CD8-positive, alpha-beta T cell (primary cell): ENCODE measurements at regions of chr10 and their contacts with region 1.

Region 1: GRCh38 chr10:132536971-132537712 is 445 bp upstream of the INPP5A start:
- DNase-seq: peak; percentile 99 to 100 (median 100)
- ATAC-seq: peak; percentile 89
- H3K4me3 ChIP-seq: peak overlapping the region; percentile 23 to 65
- H3K4me3 Mint-ChIP-seq: peak overlapping the region; percentile 79
- H3K27ac ChIP-seq: peak overlapping the region; percentile 39 to 56
- H3K27ac Mint-ChIP-seq: peak overlapping the region; percentile 75
- H3K4me1 ChIP-seq: peaks cover 49% of the 10 kb centered on the region
- H3K4me1 Mint-ChIP-seq: peaks cover 49% of the 10 kb centered on the region
- H3K27me3 ChIP-seq: peaks cover 0 to 2% of the 10 kb centered on the region in 2 experiments
- H3K27me3 Mint-ChIP-seq: no peaks in the 10 kb centered on the region
- CTCF ChIP-seq: peak; percentile 27

Region 2: DNA sequence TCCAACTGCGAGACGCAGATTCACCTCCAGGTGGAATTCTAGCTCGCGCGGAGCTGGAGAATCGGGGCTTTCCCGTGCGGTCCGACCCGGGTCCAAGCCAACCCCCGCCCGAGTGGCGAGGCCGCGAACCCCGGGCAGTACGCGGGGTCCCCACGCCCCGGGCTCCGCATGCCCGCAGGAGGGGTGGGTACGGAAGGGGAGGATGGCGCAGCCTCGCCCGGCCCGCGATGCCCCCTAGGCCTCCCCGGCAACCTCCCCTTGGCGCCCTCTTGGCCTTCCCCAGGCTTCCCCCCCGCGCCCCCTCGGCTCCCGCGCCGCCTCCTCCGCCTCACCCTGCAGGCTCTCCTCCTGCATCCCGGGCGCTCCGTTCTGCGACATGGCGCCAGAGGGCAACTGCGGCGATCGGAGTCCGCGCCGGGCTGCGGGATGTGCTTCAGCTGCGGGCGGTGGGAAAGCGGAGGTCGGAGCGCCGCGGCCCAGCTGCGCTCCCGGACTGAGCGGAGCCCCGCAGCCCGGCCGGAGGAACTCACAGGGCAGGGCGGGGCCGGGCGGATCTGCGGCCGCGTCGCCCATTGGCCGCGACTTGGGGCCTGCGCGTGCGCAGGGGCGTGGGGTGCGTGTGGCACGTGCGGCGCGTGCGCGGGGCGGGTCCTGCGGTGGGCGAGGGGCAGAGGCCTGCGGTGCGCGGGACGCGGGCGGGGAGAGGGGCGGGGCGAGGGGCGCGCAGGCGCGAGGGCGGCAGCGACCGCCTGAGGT is 555.5 kb before region 1 on chr10 and contains the start of gene BNIP3:
- CTCF ChIA-PET with region 1: no interaction called
- POLR2A ChIA-PET with region 1: no interaction called
- intact Hi-C with region 1: loop called in 1 of 2 experiments (anchors 5 kb)
- DNase-seq: peak; percentile 84 to 98 (median 94)
- ATAC-seq: peak; percentile 90
- H3K4me3 ChIP-seq: peak within 1 kb of the TSS; percentile 66 to 83
- H3K4me3 Mint-ChIP-seq: peak within 1 kb of the TSS; percentile 84
- H3K27ac ChIP-seq: peak within 1 kb of the TSS; percentile 43 to 48
- H3K27ac Mint-ChIP-seq: peak within 1 kb of the TSS; percentile 81
- H3K4me1 ChIP-seq: peaks cover 47% of the 10 kb centered on the region
- H3K4me1 Mint-ChIP-seq: peaks cover 40% of the 10 kb centered on the region
- H3K27me3 ChIP-seq: no peaks in the 10 kb centered on the region
- H3K27me3 Mint-ChIP-seq: no peaks in the 10 kb centered on the region
- CTCF ChIP-seq: no peak
- total RNA-seq, gene BNIP3: 19.2 to 21.3 TPM

Region 3: DNA sequence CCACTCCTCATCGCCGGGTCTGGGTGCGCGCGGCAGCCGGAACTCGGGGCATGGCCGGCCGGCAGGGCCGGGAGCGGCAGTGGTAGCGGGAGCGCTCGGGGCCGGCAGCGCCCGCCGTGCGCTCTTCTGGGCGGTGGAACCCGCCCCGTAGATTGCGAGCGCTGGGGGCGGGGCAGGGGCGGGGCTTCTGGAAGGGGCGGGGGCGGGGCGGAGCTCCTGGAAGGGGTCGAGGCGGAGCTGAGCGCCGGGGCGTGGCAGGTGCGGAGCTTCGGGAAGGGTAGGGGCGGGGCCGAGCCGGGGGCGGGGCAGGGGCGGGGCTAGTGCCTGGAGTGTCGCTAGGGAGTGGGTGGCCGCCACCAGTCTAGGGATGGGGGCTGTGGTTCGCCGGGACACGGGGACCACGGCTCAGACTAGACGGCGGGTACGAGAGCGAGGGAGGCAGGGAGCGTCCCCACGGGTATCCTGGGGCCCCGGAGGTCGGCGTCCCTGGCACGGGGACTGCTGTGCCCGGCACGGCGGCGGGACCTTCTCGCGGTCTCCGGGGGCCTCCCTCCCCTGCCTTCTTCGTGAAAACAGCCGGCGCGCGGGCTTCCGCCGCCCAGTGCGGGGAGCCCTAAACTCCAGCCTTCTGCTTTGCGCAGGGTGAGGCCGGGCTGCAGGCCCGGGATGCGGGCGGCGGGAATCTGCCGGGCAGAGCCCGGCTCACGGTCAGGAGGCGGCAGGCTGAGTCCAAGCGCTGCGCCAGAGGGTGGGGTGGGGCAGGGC is 229.1 kb before region 1 on chr10 and contains the start of gene STK32C:
- CTCF ChIA-PET with region 1: no interaction called
- POLR2A ChIA-PET with region 1: no interaction called
- intact Hi-C with region 1: loop called in 1 of 2 experiments (anchors 1 kb)
- DNase-seq: peak; percentile 82 to 94 (median 90)
- ATAC-seq: peak; percentile 90
- H3K4me3 ChIP-seq: peak within 1 kb of the TSS; percentile 65 to 74
- H3K4me3 Mint-ChIP-seq: peak within 1 kb of the TSS; percentile 87
- H3K27ac ChIP-seq: peak within 1 kb of the TSS; percentile 43 to 50
- H3K27ac Mint-ChIP-seq: peak within 1 kb of the TSS; percentile 60
- H3K4me1 ChIP-seq: peaks cover 13% of the 10 kb centered on the region
- H3K4me1 Mint-ChIP-seq: peaks cover 17% of the 10 kb centered on the region
- H3K27me3 ChIP-seq: peaks cover 0 to 2% of the 10 kb centered on the region in 2 experiments
- H3K27me3 Mint-ChIP-seq: no peaks in the 10 kb centered on the region
- CTCF ChIP-seq: no peak
- total RNA-seq, gene STK32C: 5.0 to 5.4 TPM

Region 4: GRCh38 chr10:132396495-132397035 is 140.6 kb before region 1 on chr10:
- CTCF ChIA-PET with region 1: no interaction called
- POLR2A ChIA-PET with region 1: no interaction called
- intact Hi-C with region 1: loop called in 1 of 2 experiments (anchors 2 kb)
- DNase-seq: peak in 8 of 9 experiments; percentile 49 to 87 (median 66)
- ATAC-seq: peak; percentile 72
- H3K4me3 ChIP-seq: peak overlapping the region; percentile 30 to 34
- H3K4me3 Mint-ChIP-seq: no peak overlapping the region
- H3K27ac ChIP-seq: peak overlapping the region; percentile 37 to 57
- H3K27ac Mint-ChIP-seq: no peak overlapping the region
- H3K4me1 ChIP-seq: peaks cover 12% of the 10 kb centered on the region
- H3K4me1 Mint-ChIP-seq: peaks cover 22% of the 10 kb centered on the region
- H3K27me3 ChIP-seq: no peaks in the 10 kb centered on the region
- H3K27me3 Mint-ChIP-seq: no peaks in the 10 kb centered on the region
- CTCF ChIP-seq: peak; percentile 17

Region 5: DNA sequence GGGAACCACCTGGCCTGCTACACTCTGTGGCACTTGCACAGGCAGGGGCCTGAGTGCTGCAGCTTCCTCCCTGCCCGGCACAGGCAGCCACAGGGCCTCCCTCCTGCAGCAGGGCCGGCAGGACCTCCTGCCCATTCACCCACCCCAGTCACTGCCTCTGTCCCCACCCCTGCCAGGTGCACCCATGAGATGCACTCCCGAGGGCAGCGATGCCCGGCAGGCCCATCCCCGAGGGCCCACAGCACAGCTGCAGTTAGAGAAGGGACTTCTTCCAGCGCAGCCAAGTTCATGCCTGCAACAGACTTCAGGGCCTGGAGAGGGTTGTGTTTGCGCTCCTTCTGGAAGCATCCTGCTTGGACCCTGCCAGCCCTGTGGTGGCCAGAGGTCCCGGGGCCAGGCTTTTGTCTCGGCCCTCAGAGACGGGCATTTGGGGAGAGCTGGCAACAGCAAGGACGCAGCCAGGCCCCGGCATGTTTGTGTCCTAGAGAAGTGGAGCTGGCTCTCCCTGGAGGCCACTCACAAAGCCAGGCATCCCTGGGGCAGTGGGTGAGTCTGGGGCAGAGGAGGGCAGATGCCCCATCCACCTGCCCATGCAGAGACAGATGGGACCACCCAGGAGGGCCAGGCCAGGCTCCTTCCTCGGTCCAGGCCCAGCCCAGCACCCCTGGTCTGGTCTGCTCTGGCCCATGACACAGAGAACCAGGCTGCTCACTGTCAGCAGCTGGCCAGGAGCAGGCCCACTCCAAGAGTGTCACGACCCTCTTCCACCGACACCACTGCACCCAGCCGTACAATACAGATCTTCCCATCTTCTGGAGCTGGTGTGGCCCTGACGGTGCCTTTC is 98.7 kb before region 1 on chr10:
- CTCF ChIA-PET with region 1: no interaction called
- POLR2A ChIA-PET with region 1: no interaction called
- intact Hi-C with region 1: no loop called
- DNase-seq: no peak
- ATAC-seq: no peak
- H3K4me3 ChIP-seq: no peak overlapping the region
- H3K4me3 Mint-ChIP-seq: no peak overlapping the region
- H3K27ac ChIP-seq: no peak overlapping the region
- H3K27ac Mint-ChIP-seq: no peak overlapping the region
- H3K4me1 ChIP-seq: peaks cover 8% of the 10 kb centered on the region
- H3K4me1 Mint-ChIP-seq: peaks cover 10% of the 10 kb centered on the region
- H3K27me3 ChIP-seq: no peaks in the 10 kb centered on the region
- H3K27me3 Mint-ChIP-seq: no peaks in the 10 kb centered on the region
- CTCF ChIP-seq: no peak

Region 6: GRCh38 chr10:132469197-132469884 is 67.8 kb before region 1 on chr10:
- CTCF ChIA-PET with region 1: no interaction called
- POLR2A ChIA-PET with region 1: no interaction called
- intact Hi-C with region 1: no loop called
- DNase-seq: no peak
- ATAC-seq: no peak
- H3K4me3 ChIP-seq: no peak overlapping the region
- H3K4me3 Mint-ChIP-seq: no peak overlapping the region
- H3K27ac ChIP-seq: no peak overlapping the region
- H3K27ac Mint-ChIP-seq: no peak overlapping the region
- H3K4me1 ChIP-seq: no peaks in the 10 kb centered on the region
- H3K4me1 Mint-ChIP-seq: no peaks in the 10 kb centered on the region
- H3K27me3 ChIP-seq: no peaks in the 10 kb centered on the region
- H3K27me3 Mint-ChIP-seq: peaks cover 4% of the 10 kb centered on the region
- CTCF ChIP-seq: no peak

Region 7: DNA sequence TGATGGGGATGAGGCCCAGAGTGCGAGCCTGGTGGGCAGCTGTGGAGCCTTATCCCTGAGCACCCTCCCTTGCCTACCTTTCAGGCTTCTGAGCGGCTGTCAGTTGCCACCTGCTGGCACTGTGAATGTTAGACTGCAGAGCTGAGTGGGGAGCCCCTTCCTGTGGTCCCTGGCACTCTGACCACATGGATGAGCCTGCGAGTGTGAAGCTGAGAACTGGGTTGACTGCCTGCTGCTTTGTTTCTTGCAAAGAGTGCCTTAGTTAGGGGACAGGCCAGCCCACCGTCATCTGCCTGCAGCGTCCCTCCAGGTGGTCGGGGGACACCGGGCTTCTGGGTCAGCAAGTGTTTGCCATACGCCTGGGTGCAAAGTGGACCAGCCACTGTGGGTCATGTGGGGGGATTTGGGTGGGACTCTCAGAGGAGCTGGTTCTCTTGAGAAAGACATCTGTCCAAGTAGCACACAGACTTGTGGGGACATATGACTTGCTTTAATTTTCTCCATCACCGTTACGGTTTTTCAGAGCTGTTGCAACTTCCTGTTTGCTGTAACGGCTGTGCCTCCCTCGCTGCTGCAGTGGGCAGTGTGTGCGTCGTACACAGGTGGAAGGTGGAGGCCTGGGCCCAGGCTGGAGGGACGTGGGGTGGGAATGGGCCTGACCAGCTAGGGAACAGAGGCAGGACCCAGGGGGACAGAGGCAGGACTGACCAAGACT is 14.1 kb after region 1 on chr10:
- CTCF ChIA-PET with region 1: interaction called, 20 read pairs
- POLR2A ChIA-PET with region 1: interaction called, 13 read pairs
- intact Hi-C with region 1: loop called (anchors 2 kb)
- DNase-seq: peak in 4 of 9 experiments; percentile 33 to 70 (median 55)
- ATAC-seq: peak; percentile 48
- H3K4me3 ChIP-seq: peak overlapping the region; percentile 21 to 26
- H3K4me3 Mint-ChIP-seq: peak overlapping the region; percentile 74
- H3K27ac ChIP-seq: no peak overlapping the region
- H3K27ac Mint-ChIP-seq: peak overlapping the region; percentile 90
- H3K4me1 ChIP-seq: peaks cover 49% of the 10 kb centered on the region
- H3K4me1 Mint-ChIP-seq: peaks cover 40% of the 10 kb centered on the region
- H3K27me3 ChIP-seq: no peaks in the 10 kb centered on the region
- H3K27me3 Mint-ChIP-seq: no peaks in the 10 kb centered on the region
- CTCF ChIP-seq: peak; percentile 31

Region 8: GRCh38 chr10:132637477-132638129 is 100.5 kb after region 1 on chr10:
- CTCF ChIA-PET with region 1: interaction called, 3 read pairs
- POLR2A ChIA-PET with region 1: interaction called, 3 read pairs
- intact Hi-C with region 1: loop called (anchors 1 to 5 kb)
- DNase-seq: peak in 3 of 9 experiments; percentile 26 to 70 (median 61)
- ATAC-seq: peak; percentile 72
- H3K4me3 ChIP-seq: no peak overlapping the region
- H3K4me3 Mint-ChIP-seq: no peak overlapping the region
- H3K27ac ChIP-seq: no peak overlapping the region
- H3K27ac Mint-ChIP-seq: no peak overlapping the region
- H3K4me1 ChIP-seq: peaks cover 4% of the 10 kb centered on the region
- H3K4me1 Mint-ChIP-seq: peaks cover 28% of the 10 kb centered on the region
- H3K27me3 ChIP-seq: no peaks in the 10 kb centered on the region
- H3K27me3 Mint-ChIP-seq: no peaks in the 10 kb centered on the region
- CTCF ChIP-seq: peak; percentile 67